Left lung (tissue), 14 donors: ENCODE measurements at regions of chr12 and their contacts with region 1.

Region 1: GRCh38 chr12:95583933-95584332 is 32.7 kb upstream of the USP44 start:
- DNase-seq: no peak
- ATAC-seq: no peak
- H3K4me3 ChIP-seq: no peak overlapping the region
- H3K27ac ChIP-seq: no peak overlapping the region
- H3K4me1 ChIP-seq: no peaks in the 10 kb centered on the region
- H3K27me3 ChIP-seq: no peaks in the 10 kb centered on the region
- CTCF ChIP-seq: no peak

Region 2: DNA sequence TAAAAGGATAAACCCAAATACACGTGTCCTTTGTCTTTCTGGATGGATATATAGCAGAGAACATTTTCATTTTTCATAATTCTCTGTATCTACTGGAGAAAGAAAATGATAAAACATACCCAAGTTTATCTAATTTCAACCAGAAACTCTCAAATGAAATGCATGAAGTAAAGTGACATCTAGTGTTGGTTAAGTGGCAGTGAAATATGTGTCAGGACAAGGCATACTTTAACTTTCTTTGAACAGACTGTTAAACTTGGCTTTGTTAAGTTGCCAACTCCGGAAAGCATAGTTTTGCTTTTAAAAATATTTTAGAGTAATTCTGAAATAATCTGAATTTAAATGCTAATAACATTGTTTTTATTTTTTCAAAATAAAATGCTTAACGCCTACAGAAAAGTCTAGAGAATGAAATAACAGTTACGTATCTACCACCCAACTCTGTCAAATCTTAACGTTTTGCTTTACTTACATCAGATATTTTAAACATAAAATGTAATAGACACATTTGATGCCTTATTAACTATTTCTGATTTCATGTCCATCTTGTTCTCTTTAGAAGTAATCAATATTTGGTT is 231.8 kb after region 1 on chr12:
- intact Hi-C with region 1: loop called in 1 of 2 experiments (anchors 2 kb)
- DNase-seq: peak in 1 of 4 donors; percentile 24
- ATAC-seq: peak; percentile 82
- H3K4me3 ChIP-seq: no peak overlapping the region
- H3K27ac ChIP-seq: no peak overlapping the region
- H3K4me1 ChIP-seq: no peaks in the 10 kb centered on the region
- H3K27me3 ChIP-seq: no peaks in the 10 kb centered on the region
- CTCF ChIP-seq: peak; percentile 46 to 59